T-cell (primary cell): ENCODE measurements at regions of chr20 and their contacts with region 1.

Region 1: DNA sequence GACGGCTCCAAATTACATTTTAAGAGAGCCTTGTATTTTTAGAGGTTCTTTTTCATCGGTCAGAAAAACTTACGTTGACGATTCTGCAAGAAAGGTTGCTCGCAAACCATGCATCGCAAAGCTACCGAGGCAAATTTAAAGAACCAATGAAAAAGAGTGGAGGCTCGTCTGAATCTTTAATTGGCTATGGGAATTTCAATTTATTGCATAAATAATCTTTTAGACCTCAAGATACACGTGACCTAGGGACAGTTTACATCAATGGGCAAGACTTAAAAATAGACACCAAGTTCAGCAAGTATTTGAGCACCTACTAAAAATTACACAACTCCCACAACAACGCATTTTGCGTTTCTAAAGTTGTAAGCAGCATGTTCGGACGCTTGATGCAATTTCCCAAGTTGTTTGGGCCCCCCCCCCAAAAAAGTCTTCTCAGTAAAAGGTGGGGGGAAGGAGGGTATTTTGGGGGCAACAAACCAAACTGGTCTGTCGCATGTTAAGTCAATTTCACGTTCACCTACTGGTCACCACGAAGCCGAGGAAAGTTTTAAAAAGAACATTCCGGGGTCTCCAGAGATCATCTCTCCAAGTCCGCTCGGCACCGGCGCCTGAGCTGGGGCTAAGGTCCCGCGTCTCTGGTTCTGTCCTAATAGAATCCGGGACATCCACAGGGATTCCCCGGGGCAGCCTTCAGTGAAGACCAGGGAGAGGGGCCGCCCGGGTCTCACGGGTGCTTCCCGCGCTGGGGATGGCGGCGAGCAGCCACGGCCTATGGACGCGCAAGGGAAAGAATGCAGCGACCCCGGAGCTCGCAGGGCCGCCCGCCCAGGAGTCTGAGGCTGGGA is 851 bp downstream of the SNX5 start:
- DNase-seq: peak in 4 of 35 experiments; percentile 3 to 42 (median 4)
- ATAC-seq: no peak
- H3K4me3 ChIP-seq: peak overlapping the region; percentile 88 to 98
- H3K4me3 Mint-ChIP-seq: peak overlapping the region; percentile 91 to 96 (median 95)
- H3K27ac ChIP-seq: peak overlapping the region; percentile 98
- H3K27ac Mint-ChIP-seq: peak overlapping the region; percentile 76 to 82
- H3K4me1 ChIP-seq: peaks cover 48 to 61% of the 10 kb centered on the region in 2 experiments
- H3K4me1 Mint-ChIP-seq: peaks cover 77 to 87% (median 79%) of the 10 kb centered on the region in 3 donors
- H3K27me3 ChIP-seq: no peaks in the 10 kb centered on the region
- H3K27me3 Mint-ChIP-seq: no peaks in the 10 kb centered on the region

Region 2: DNA sequence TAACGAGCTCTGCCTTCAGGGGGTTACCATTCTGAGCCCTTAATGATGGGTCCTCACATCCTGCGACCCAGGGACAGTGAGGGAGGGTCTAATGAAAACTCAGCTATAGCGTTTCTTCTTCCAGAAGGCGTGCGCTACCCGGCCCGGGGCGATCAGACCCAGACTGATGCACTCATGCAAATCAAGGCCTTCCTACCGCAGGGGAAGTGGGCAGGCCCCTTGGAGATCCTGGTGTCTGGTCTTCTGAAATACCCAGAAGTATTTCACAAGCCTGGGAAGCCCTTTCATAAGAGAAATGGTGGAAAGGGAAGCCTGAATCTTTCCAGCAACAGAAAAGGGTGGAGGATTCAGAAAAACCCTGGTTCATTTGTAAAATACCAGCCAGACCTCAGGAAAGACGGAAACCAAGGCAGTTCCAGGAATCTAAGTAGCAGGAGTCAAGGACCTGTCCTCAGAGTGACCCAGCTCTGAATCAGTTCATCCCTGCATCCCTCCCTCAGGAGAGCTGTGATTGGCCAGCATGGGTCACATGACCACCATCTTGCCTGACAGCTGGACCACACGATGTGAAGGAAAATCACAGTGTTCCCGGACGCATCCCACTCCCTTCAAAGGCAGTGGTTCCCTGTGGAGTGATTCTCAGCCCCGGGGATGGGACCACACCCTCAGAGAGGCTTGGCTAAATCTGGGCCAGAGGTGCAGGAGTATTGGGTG is 449.2 kb before region 1 on chr20:
- CTCF ChIA-PET with region 1: interaction called in 1 of 2 experiments, 15 read pairs
- POLR2A ChIA-PET with region 1: no interaction called
- DNase-seq: no peak
- ATAC-seq: no peak
- H3K4me3 ChIP-seq: no peak overlapping the region
- H3K4me3 Mint-ChIP-seq: no peak overlapping the region
- H3K27ac ChIP-seq: no peak overlapping the region
- H3K27ac Mint-ChIP-seq: no peak overlapping the region
- H3K4me1 ChIP-seq: no peaks in the 10 kb centered on the region
- H3K4me1 Mint-ChIP-seq: peaks cover 0 to 5% (median 0%) of the 10 kb centered on the region in 3 donors
- H3K27me3 ChIP-seq: no peaks in the 10 kb centered on the region
- H3K27me3 Mint-ChIP-seq: no peaks in the 10 kb centered on the region

Region 3: GRCh38 chr20:17682103-17682888 is 285.4 kb before region 1 on chr20 and contains the start of gene RRBP1:
- CTCF ChIA-PET with region 1: interaction called in 1 of 2 experiments, 15 read pairs
- POLR2A ChIA-PET with region 1: interaction called in 1 of 2 experiments, 5 read pairs
- DNase-seq: peak; percentile 91 to 97 (median 95)
- ATAC-seq: peak; percentile 92 to 93 (median 93)
- H3K4me3 ChIP-seq: peak within 1 kb of the TSS; percentile 67 to 73
- H3K4me3 Mint-ChIP-seq: peak within 1 kb of the TSS; percentile 83 to 86 (median 85)
- H3K27ac ChIP-seq: peak within 1 kb of the TSS; percentile 54
- H3K27ac Mint-ChIP-seq: peak within 1 kb of the TSS; percentile 75 to 86
- H3K4me1 ChIP-seq: peaks cover 3 to 22% of the 10 kb centered on the region in 2 experiments
- H3K4me1 Mint-ChIP-seq: peaks cover 17 to 26% (median 24%) of the 10 kb centered on the region in 3 donors
- H3K27me3 ChIP-seq: peaks cover 0 to 22% of the 10 kb centered on the region in 2 experiments
- H3K27me3 Mint-ChIP-seq: peaks cover 23 to 35% of the 10 kb centered on the region in 2 donors
- total RNA-seq, gene RRBP1: 26.3 to 32.4 (median 30.1) TPM

Region 4: DNA sequence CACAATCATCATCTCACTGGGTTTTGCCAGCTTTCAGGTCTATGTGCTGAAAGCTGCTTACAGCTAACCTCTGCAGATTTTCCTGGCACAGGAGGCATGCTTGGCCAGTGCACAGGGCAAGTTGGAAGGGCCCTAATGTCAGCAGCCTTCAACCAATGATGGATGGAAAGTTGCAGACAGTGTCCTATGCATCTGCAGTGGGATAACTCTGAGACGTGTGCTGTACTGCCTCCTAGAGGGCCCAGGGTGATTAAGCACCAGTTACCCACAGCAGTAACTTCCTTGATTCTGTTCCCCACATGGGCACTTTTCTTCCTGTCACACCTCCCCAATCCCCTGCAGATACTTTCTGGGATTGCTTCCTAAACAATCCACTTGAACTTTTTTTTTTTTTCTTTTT is 51.3 kb after region 1 on chr20:
- CTCF ChIA-PET with region 1: no interaction called
- POLR2A ChIA-PET with region 1: no interaction called
- DNase-seq: peak in 1 of 35 experiments; percentile 35
- ATAC-seq: no peak
- H3K4me3 ChIP-seq: no peak overlapping the region
- H3K4me3 Mint-ChIP-seq: no peak overlapping the region
- H3K27ac ChIP-seq: no peak overlapping the region
- H3K27ac Mint-ChIP-seq: no peak overlapping the region
- H3K4me1 ChIP-seq: no peaks in the 10 kb centered on the region
- H3K4me1 Mint-ChIP-seq: no peaks in the 10 kb centered on the region
- H3K27me3 ChIP-seq: peaks cover 0 to 6% of the 10 kb centered on the region in 2 experiments
- H3K27me3 Mint-ChIP-seq: peaks cover 4 to 6% of the 10 kb centered on the region in 2 donors

Region 5: DNA sequence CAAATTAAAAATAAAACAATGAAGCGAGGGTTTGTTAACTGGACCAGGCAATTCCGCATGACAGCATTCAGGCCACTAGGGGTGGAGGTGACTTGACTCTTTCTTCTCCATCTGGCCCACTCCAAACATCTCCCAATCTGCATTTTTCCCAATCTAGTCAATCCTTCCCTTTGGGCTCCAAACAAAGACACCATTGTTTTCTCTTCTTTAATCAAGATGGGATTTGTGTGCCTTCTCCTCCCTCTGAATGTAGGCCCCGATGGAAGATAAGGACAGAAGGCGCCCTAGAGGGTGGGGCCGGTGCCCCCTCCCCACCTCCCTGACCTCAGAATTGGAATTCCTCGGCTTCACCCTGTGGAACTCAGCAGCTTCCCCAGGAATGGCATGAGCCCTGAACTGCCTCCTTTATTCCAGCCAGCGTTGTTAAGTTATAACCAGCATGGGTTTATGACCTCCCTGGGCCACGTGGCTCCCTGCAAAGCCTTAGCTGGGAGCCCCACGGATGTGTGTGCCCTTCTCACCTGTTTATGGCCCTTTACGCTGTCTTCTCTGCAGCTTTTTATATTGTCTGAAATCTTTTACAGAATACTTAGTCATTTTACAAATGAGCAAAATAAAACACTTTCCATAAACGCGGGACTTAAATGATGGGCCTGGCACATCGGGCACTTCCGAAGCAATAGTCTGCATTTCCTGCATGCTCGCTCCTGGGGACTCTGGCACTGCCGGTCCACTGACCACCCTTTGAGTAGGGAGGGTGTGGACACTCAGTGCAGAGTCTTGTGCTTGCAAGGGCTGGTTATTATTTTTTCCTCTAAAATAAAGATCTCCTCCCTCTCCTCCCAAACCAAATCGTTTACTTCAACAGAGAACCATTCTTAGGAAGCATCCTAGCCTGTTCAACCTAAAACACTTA is 65.5 kb after region 1 on chr20:
- CTCF ChIA-PET with region 1: no interaction called
- POLR2A ChIA-PET with region 1: no interaction called
- DNase-seq: no peak
- ATAC-seq: no peak
- H3K4me3 ChIP-seq: no peak overlapping the region
- H3K4me3 Mint-ChIP-seq: no peak overlapping the region
- H3K27ac ChIP-seq: no peak overlapping the region
- H3K27ac Mint-ChIP-seq: no peak overlapping the region
- H3K4me1 ChIP-seq: no peaks in the 10 kb centered on the region
- H3K4me1 Mint-ChIP-seq: no peaks in the 10 kb centered on the region
- H3K27me3 ChIP-seq: peaks cover 0 to 24% of the 10 kb centered on the region in 2 experiments
- H3K27me3 Mint-ChIP-seq: peaks cover 9 to 21% of the 10 kb centered on the region in 2 donors

Region 6: DNA sequence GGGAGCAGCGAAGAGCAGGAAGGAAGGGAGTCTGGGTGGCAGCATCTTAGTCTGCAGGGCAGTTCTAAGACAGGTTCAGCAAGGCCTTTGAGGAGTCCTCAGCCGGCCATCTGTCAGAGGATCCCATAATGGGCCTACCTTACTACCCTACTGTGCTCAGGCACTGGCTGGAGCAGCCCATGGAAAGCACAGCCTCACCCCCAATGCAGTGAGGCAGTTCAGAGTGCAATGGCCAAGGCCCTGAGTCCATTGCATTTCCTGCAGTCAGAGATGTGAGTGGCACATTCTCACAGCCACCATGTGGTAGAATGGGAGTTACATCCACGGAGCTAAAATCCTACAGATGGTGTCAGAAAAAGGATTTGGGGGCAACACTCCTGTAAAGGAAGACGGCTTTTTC is 109.4 kb after region 1 on chr20:
- CTCF ChIA-PET with region 1: no interaction called
- POLR2A ChIA-PET with region 1: no interaction called
- DNase-seq: no peak
- ATAC-seq: no peak
- H3K4me3 ChIP-seq: no peak overlapping the region
- H3K4me3 Mint-ChIP-seq: no peak overlapping the region
- H3K27ac ChIP-seq: no peak overlapping the region
- H3K27ac Mint-ChIP-seq: no peak overlapping the region
- H3K4me1 ChIP-seq: no peaks in the 10 kb centered on the region
- H3K4me1 Mint-ChIP-seq: no peaks in the 10 kb centered on the region
- H3K27me3 ChIP-seq: peaks cover 0 to 25% of the 10 kb centered on the region in 2 experiments
- H3K27me3 Mint-ChIP-seq: peaks cover 19 to 30% of the 10 kb centered on the region in 2 donors